Common myeloid progenitor, CD34-positive (primary cell): ENCODE measurements at regions of chr19 and their contacts with region 1.

Region 1: GRCh38 chr19:1605236-1606137 is at the start of gene UQCR11:
- DNase-seq: peak; percentile 97 to 98 (median 98)
- H3K4me3 ChIP-seq: peak within 1 kb of the TSS; percentile 81 to 99 (median 94)
- H3K27ac ChIP-seq: peak within 1 kb of the TSS; percentile 58 to 81
- H3K4me1 ChIP-seq: peaks cover 0 to 56% (median 40%) of the 10 kb centered on the region in 4 experiments
- H3K27me3 ChIP-seq: no peaks in the 10 kb centered on the region

Region 2: GRCh38 chr19:1618157-1619093 is 12.9 kb after region 1 on chr19:
- CTCF ChIA-PET with region 1: interaction called, 11 read pairs
- POLR2A ChIA-PET with region 1: no interaction called
- DNase-seq: peak; percentile 11 to 35 (median 20)
- H3K4me3 ChIP-seq: no peak overlapping the region
- H3K27ac ChIP-seq: no peak overlapping the region
- H3K4me1 ChIP-seq: no peaks in the 10 kb centered on the region
- H3K27me3 ChIP-seq: no peaks in the 10 kb centered on the region